Right ventricle myocardium inferior (tissue), 1 donor: ENCODE measurements at regions of chr19 and their contacts with region 1.

Region 1: DNA sequence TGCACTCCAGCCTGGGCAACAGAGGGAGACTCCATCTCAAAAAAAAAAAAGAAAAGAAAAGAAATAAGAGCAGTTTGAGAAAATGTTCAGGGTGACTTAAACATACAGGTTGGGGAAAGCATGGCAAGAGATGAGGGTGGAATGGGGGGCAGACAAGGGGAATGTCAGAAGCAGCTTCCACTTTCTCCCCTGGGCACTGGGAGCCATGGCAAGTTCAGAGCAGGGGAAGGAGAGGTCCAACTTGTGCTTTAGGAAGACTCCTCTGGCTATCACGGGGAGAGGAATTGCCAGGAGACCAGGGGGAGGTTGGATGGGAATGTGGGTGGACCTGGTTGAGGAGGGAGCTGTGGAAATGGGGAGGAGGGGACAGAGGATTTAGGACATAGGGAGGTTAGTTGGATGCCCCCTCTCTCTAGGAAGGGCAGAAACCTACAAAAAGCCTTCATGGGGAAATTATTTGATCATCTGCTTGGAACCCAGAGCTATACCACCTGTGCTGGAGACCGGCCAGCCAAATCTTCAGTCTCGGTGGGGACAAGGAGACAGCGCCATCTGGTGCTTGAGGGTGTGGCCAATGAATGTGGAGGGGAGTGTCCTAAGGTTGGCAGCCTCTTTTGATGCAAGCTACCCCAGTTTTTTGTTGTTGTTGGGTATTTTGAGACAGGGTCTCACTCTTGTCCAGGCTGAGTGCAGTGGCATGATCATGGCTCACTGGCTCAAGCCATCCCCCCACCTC is 7.3 kb upstream of the STRN4 start:
- DNase-seq: no peak
- ATAC-seq: no peak

Region 2: DNA sequence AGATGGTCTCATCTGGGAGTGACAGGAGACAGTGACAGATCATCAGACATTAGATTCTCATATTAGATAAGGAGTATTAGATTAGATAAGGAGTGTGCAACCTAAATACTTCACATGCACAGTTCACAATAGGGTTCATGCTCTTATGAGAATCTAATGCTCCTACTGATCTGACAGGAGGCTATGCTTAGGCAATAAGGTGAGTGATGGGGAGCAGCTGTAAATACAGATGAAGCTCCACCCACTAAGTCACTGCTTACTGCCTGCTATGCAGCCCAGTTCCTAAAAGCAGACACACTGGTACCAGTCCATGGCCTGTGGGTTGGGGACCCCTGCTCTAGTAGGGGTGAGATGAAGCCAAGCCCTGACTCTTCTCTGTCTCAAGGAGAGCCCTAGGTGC is 619.1 kb before region 1 on chr19:
- intact Hi-C with region 1: no loop called
- DNase-seq: no peak
- ATAC-seq: no peak

Region 3: DNA sequence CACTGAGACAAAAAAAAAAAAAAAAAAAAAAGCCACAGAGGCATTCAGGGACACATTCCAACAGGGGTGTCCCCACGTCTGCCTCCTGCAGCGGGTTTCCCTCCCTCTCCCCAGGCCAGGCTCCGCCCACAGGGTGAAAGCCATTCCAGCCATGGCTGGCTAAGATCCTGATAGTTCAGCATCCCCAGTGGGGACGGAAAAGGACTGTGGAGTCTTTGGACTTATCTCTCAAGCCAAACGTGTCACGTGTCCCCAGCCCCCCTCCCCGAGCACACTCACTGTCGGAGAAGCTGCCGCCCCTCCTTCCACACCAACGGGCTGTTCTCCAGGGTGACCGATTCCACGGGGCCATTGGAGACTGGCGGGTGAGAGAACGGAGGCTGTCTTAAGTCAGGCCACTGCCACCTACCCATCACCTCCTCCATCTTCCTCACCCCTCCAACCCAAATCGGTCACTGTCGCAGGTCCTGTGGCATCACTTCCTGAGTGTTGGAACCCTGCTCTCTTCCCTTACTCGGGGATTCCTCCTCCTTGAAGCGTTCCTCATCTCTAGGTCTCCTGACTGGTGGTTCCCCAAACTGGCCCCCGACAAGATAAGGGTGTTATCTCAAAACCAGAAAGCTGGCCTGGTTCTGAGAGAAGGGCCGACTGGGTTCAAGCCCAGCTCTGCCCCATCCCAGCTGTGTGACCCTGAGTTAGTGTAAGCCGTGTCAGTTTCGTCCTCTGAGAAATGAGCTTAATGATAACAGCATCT is 16.9 kb before region 1 on chr19:
- intact Hi-C with region 1: no loop called
- DNase-seq: peak; percentile 50
- ATAC-seq: peak; percentile 33

Region 4: DNA sequence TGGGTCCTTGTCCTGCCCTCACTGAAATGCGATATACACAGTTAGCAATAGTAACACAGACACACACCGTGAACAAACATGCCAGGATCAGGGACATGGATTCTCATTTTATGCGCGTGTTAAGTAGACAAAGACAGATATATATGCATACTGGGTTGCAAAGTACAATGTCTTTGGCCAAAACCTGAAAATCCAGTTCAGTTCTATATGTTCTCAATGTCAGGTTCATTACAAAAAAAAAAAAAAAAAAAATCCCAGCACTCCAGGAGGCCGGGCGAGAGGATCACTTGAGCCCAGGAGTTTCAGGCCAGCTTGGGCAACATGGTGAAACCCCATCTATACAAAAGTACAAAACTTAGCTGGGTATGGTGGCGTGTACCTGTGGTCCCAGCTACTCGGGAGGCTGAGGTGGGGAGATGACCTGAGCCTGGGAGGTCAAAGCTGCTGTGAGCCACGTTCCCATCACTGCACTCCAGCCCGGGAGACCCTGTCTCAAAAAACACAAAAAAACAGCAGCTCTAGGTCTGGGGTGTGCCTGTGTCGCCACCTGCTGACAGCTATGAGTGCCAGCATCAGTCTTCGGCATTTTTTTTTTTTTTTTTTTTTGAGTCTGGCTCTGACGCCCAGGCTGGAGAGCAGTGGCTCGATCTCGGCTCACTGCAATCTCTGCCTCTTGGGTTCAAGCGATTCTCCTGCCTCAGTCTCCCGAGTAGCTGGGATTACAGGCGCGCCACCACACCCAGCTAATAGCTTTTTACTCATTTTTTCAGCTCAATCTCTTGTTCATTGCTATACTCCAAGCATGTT is 86.8 kb after region 1 on chr19:
- intact Hi-C with region 1: loop called (anchors 1 kb)
- DNase-seq: no peak
- ATAC-seq: peak; percentile 66